AG04450 (cell line): ENCODE measurements at regions of chr3 and their contacts with region 1.

Region 1: DNA sequence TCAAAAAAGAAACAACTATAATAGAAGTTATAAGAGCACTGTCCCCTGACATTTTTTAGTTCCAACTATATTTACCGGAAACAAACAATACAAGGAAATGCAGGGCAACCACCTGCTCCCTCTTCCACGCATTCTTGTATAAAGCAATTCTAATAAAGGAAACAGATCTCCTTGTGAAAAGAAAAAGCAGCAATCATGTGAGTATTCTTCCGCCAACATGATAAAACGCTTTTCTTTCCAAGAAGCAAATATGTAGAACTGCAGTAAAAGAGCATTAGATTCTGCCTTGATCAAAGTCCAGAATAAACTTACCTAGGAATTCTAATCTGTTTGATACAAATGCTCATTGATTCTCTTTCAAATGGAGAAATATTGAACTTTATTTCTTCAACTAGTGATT is 230.3 kb downstream of the CNTN3 start:
- DNase-seq: no peak
- H3K4me3 ChIP-seq: no peak overlapping the region
- H3K27ac ChIP-seq: no peak overlapping the region
- H3K27me3 ChIP-seq: no peaks in the 10 kb centered on the region
- CTCF ChIP-seq: no peak

Region 2: DNA sequence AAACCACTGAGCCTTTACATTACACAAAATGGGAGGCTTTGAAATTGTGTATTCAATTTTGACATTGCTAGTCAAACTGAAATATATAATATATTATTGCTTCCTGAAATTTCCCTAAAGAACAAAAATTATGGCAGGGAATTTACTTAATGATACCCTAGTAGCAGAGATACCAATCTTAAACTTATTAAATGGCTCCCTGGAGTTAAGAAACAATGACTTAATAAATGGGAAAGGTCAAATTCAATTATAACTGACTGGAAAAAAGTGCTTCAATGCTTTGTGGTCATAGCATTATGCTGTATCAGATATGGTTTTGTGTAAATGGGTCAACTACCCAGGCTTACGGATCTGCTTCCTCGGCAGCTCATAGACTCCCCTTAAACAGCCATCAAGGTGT is 13.8 kb before region 1 on chr3:
- CTCF ChIA-PET with region 1: no interaction called
- POLR2A ChIA-PET with region 1: no interaction called
- DNase-seq: no peak
- H3K4me3 ChIP-seq: no peak overlapping the region
- H3K27ac ChIP-seq: no peak overlapping the region
- H3K27me3 ChIP-seq: no peaks in the 10 kb centered on the region
- CTCF ChIP-seq: no peak

Region 3: DNA sequence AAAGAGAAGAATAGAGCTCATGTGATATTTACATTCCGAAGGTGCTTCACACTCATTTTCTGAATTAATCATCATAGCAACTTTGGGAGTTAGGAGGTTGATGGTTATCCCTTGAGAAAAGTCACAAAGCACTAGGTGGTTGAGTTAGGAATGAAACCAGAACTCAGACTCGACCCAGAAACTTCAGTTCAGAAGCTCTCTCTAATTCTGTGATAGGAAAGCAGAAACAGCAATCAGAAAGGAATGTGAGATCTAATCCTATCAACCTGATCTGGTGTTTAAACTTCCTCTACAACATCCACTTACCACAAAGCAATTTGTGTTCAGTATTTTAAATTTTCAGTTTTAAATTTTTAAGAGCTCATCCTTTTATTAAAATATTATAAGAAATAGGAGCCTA is 19.1 kb after region 1 on chr3:
- CTCF ChIA-PET with region 1: no interaction called
- POLR2A ChIA-PET with region 1: no interaction called
- DNase-seq: no peak
- H3K4me3 ChIP-seq: no peak overlapping the region
- H3K27ac ChIP-seq: no peak overlapping the region
- H3K27me3 ChIP-seq: no peaks in the 10 kb centered on the region
- CTCF ChIP-seq: no peak

Region 4: GRCh38 chr3:74630602-74631001 is 246.4 kb after region 1 on chr3:
- CTCF ChIA-PET with region 1: interaction called, 11 read pairs
- POLR2A ChIA-PET with region 1: no interaction called
- DNase-seq: no peak
- H3K4me3 ChIP-seq: no peak overlapping the region
- H3K27ac ChIP-seq: no peak overlapping the region
- H3K27me3 ChIP-seq: no peaks in the 10 kb centered on the region
- CTCF ChIP-seq: peak; percentile 52